ENCODE measurements at regions of chr7 and their contacts with region 1.

Region 1: GRCh38 chr7:123557398-123558288 is at the start of gene NDUFA5:
- DNase-seq: peak; percentile 99
- H3K4me3 ChIP-seq: peak within 1 kb of the TSS; percentile 70 to 94 (median 84)
- H3K27ac ChIP-seq: peak within 1 kb of the TSS; percentile 89 to 91 (median 90)
- H3K4me1 ChIP-seq: peaks cover 32 to 48% (median 44%) of the 10 kb centered on the region in 4 donors
- H3K27me3 ChIP-seq: no peaks in the 10 kb centered on the region
- CTCF ChIP-seq: peak in 1 of 3 experiments; percentile 15
- EP300 ChIP-seq: no peak
- POLR2A ChIP-seq: peak; percentile 71
- total RNA-seq, gene NDUFA5: 70.7 to 109 (median 79.7) TPM

Region 2: DNA sequence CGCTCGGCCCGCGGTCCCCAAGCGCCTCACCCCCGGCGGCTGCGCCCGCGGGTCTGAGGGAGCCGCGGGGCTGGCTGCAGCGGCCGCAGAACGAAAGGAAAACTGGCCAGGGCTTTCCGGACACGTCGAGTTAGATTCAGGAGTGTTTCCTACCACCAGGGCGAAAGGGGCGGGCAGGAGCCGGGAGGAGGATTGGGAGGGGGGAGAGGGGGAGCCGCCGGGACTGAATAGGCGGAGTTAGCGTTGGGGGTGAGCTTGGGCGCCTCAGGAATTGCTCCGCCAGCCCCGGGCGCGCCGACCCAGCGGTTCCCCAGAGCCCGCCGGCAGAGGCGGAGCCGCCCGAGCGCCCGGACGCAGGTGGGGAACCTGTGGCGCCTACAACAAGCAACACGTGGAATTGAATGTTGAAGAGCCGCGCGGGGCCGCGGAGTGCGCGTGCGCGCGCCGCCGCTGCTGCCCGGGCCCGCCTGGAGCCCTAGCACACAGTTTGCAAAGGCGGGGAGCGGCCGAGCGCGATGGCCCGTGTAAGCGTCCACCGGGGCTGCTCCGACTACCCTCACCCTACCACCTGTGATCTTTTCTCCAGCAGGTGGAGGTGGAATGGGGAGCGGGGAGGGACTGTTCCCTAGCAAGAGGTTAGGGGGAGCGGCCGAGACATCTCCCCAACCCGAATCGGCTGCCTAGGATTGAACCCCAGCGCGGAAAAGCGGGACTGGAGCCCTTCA is 671.1 kb before region 1 on chr7 and contains the start of gene CADPS2:
- intact Hi-C with region 1: loop called (anchors 10 kb)
- DNase-seq: no peak
- H3K4me3 ChIP-seq: peak within 1 kb of the TSS; percentile 83 to 99 (median 89)
- H3K27ac ChIP-seq: peak within 1 kb of the TSS; percentile 93 to 97 (median 94)
- H3K4me1 ChIP-seq: peaks cover 2 to 47% (median 37%) of the 10 kb centered on the region in 4 donors
- H3K27me3 ChIP-seq: no peaks in the 10 kb centered on the region
- CTCF ChIP-seq: peak; percentile 21 to 53 (median 22)
- EP300 ChIP-seq: no peak
- POLR2A ChIP-seq: peak; percentile 48
- total RNA-seq, gene CADPS2: 27.3 to 154 (median 114) TPM

Region 3: GRCh38 chr7:123748734-123749536 is 191.3 kb after region 1 on chr7 and contains the start of gene WASL:
- intact Hi-C with region 1: loop called (anchors 5 kb)
- DNase-seq: peak; percentile 98
- H3K4me3 ChIP-seq: peak within 1 kb of the TSS; percentile 89 to 96 (median 92)
- H3K27ac ChIP-seq: peak within 1 kb of the TSS; percentile 97 to 99 (median 98)
- H3K4me1 ChIP-seq: peaks cover 39 to 68% (median 63%) of the 10 kb centered on the region in 4 donors
- H3K27me3 ChIP-seq: no peaks in the 10 kb centered on the region
- CTCF ChIP-seq: peak; percentile 20 to 22 (median 21)
- EP300 ChIP-seq: no peak
- POLR2A ChIP-seq: peak; percentile 87
- total RNA-seq, gene WASL: 36.0 to 51.5 (median 38.5) TPM